ENCODE measurements at regions of chr7 and their contacts with region 1.

Region 1: DNA sequence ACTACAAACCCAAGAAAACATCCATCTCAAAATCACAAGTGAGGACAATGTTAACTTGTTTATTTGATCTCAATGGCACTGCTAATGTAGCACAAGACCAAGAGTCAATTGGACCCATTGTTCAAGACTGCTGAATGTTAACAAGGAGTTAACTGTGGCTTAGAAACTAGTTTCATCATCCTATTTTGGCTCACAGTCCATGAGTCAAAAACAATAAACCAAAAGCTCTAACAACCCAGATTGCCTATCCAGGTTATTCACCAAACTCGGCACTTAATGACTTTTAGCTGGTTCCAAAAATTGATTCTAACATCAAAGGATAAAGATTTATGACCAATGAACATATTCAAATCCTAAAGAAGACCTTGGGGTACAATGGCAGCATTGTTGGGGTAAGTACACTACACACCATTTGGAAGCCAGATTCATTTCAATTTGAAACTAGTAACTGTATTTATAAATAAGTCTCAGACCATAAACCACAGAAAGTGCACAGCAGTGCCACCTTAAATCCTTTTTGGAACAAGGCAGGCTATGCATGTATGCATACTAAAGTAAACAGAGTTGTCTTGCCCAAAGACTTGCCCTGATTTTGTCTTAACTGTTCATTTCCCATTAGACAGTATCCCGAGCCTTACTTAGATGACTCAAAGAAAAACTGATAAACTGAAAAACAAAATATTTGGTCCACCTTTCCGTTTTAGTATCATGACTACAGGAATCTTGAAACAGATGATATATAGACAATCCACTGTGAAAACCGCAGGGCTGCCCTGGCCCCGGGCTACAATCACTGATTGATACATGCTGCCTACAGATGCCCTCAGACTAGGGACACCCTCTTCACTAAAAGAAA is 84.5 kb downstream of the SRPK2 start:
- DNase-seq: peak in 5 of 10 donors; percentile 22 to 73 (median 48)
- H3K4me3 ChIP-seq: peak overlapping the region in 57 of 59 donors; percentile 12 to 70 (median 47)
- H3K27ac ChIP-seq: peak overlapping the region; percentile 35 to 98 (median 92)
- H3K27me3 ChIP-seq: no peaks in the 10 kb centered on the region
- CTCF ChIP-seq: peak in 1 of 56 donors; percentile 21

Region 2: GRCh38 chr7:105202616-105203015 is 101.7 kb before region 1 on chr7:
- intact Hi-C with region 1: loop called in 1 of 2 experiments (anchors 5 kb)
- DNase-seq: no peak
- H3K4me3 ChIP-seq: peak overlapping the region in 32 of 59 donors; percentile 0 to 53 (median 20)
- H3K27ac ChIP-seq: peak overlapping the region; percentile 50 to 98 (median 90)
- H3K27me3 ChIP-seq: no peaks in the 10 kb centered on the region
- CTCF ChIP-seq: peak in 1 of 56 donors; percentile 11

Region 3: GRCh38 chr7:105934572-105935185 is 630.4 kb after region 1 on chr7:
- intact Hi-C with region 1: no loop called
- DNase-seq: peak in 1 of 10 donors; percentile 33
- H3K4me3 ChIP-seq: no peak overlapping the region
- H3K27ac ChIP-seq: peak overlapping the region in 7 of 59 donors; percentile 39 to 82 (median 71)
- H3K27me3 ChIP-seq: no peaks in the 10 kb centered on the region
- CTCF ChIP-seq: peak in 33 of 56 donors; percentile 8 to 55 (median 30)